ENCODE measurements at regions of chr9 and their contacts with region 1.

Region 1: GRCh38 chr9:8560560-8561525 is 761.3 kb upstream of the DMAC1 start:
- DNase-seq: no peak
- H3K4me3 ChIP-seq: no peak overlapping the region
- H3K27ac ChIP-seq: no peak overlapping the region
- H3K4me1 ChIP-seq: no peaks in the 10 kb centered on the region
- H3K27me3 ChIP-seq: no peaks in the 10 kb centered on the region
- CTCF ChIP-seq: no peak

Region 2: DNA sequence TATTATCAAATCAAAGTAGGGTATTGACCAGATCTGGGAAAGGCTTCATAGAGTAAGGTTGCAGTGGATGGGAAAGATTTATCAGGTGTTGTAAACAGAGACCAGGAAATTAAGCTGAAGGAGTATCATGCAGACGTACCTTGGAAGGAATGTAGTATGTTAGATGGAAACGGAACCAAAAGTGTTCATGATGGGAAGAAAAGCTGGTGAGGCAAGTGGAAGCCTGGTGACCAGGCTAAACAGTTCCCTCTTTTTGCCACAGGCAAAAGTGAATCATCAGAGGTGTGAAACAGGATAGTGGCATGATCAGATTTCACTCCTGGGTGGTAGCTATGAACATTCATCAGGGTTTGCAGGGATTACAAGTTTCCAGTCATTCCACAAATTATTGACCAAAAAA is 18.8 kb after region 1 on chr9:
- CTCF ChIA-PET with region 1: no interaction called
- POLR2A ChIA-PET with region 1: no interaction called
- intact Hi-C with region 1: no loop called
- DNase-seq: no peak
- H3K4me3 ChIP-seq: no peak overlapping the region
- H3K27ac ChIP-seq: no peak overlapping the region
- H3K4me1 ChIP-seq: no peaks in the 10 kb centered on the region
- H3K27me3 ChIP-seq: peaks cover 23% of the 10 kb centered on the region
- CTCF ChIP-seq: no peak

Region 3: DNA sequence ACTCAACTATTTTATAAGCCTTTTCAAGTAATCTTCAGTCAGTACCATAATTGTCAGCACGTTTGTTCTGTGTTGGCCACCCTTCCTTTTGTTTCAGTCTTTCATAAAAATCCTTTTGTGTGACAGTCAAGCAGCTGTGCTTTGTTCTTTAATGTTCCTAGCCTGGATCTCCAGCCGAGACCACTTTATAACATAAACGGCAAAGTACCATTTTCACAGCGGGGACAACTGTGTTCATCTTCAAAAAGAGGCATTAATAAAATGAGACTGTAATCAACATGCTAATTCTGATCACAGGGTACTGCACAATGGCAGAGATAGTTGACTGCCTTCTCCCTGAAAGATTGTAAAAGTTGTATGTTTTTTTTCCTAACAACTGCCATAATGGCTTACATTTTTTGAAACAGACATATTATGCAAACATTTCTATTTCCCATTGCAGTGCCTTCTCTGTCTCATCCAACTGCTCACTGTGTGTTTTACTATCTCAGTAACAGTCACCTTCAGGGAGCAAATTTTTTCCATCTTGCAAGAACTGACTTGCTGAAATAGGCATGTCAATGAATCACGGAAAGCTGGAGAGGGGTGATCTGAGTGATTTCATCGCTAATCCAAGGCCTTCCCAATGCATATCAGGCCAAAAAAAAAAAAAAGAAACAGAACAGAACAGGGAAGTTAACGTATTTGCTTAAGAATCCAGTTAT is 67.3 kb after region 1 on chr9:
- CTCF ChIA-PET with region 1: no interaction called
- POLR2A ChIA-PET with region 1: no interaction called
- intact Hi-C with region 1: loop called (anchors 10 kb)
- DNase-seq: no peak
- H3K4me3 ChIP-seq: no peak overlapping the region
- H3K27ac ChIP-seq: no peak overlapping the region
- H3K4me1 ChIP-seq: no peaks in the 10 kb centered on the region
- H3K27me3 ChIP-seq: peaks cover 36% of the 10 kb centered on the region
- CTCF ChIP-seq: no peak

Region 4: DNA sequence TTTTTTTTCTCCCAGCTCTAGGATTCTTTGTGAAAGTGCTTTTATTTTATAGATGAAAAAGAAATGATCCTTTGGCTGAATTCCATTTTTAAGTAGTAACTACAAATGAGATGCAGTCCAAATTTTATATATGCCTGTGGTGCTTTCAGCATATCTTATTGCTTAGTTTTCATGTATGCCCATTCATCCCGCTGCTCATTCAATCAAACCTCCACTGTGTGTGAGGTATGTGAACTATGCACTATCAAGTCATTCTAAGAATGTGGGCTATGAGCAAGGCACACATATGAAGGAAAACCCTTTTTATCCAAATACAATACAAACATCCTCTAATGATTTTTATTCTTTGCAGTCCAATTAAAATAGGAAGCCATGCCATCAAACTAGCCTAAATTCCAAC is 307.8 kb after region 1 on chr9:
- CTCF ChIA-PET with region 1: no interaction called
- POLR2A ChIA-PET with region 1: no interaction called
- intact Hi-C with region 1: no loop called
- DNase-seq: no peak
- H3K4me3 ChIP-seq: no peak overlapping the region
- H3K27ac ChIP-seq: no peak overlapping the region
- H3K4me1 ChIP-seq: no peaks in the 10 kb centered on the region
- H3K27me3 ChIP-seq: peaks cover 86% of the 10 kb centered on the region
- CTCF ChIP-seq: no peak